ENCODE measurements at regions of chr9 and their contacts with region 1.

Region 1: DNA sequence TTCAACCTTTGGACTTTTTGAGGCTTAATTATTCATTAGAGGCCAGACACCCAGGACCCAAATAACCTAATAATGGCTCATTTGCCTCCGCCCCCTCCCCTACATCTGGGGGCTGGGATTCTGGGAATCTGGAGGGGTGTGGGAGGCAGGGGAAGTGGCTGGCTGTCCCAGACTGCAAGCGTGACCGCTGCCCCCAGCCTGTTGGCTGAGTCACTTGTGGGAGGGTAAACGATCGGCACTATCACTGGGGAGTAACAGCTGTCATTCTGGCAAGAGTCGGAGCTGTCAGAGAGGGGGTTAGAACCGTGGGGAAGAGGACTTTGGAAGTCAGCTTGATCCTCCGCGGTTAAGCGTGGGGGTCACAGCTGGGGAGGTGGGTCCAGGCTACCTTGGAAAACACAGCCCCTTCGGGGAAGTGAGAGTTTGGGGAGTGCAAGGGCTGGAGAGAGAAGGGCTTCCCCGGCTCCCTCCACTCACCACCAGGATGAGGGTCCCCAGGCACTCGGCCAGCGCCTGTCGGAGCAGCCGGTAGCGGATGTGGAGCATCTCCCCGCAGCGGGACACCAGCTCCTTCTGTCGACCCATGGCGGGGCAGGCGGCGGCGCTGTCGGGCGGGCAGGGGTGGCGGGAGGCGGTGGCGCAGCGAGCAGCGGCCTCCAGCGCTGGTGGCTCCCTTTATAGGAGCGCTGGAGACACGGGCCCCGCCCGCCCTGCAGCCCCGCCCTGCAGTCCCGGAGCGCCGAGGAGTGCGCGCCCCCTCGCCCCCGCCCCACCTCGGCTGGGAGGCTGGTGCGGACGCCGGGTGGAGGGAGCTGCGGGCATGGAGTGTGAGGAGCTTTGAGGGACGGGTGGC is at the start of gene AQP3:
- DNase-seq: peak; percentile 85
- ATAC-seq: peak; percentile 68
- H3K4me3 Mint-ChIP-seq: peak within 1 kb of the TSS; percentile 79
- H3K27ac Mint-ChIP-seq: peak within 1 kb of the TSS; percentile 93
- H3K4me1 Mint-ChIP-seq: peaks cover 43% of the 10 kb centered on the region
- H3K27me3 Mint-ChIP-seq: no peaks in the 10 kb centered on the region
- total RNA-seq, gene AQP3: 8.5 to 11.3 TPM

Region 2: DNA sequence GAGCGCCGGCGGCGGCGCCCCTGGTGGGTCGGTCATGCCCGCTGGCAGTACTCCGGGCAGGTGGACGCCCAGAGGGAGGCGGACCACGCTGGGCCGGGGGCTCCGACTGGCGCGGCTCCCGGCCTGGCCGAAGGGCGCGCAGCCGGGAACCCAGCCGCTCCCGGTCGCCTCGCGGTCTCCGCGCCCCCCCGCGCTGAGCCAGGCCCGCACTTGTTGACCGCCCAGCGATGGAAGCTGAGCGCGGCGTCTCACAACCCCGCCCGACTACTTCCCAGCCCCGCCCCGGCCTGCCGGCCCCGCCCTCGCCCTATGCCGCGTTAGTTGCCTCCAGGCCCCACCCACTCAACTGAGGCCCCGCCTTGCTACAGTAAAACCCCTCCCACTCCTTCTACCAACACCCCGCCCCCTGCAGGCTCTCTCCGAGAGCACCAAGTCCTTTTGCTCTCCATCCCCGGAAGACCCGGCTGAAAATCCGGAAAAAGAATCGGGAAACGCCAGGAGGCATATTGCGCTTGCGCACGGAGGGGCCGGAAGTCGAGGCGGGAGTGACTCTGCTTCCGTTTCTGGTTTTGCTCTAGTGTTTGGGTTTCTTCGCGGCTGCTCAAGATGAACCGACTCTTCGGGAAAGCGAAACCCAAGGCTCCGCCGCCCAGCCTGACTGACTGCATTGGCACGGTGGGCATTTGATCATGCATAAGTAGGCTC is 182.5 kb before region 1 on chr9 and contains the starts of genes BAG1 and CHMP5:
- CTCF ChIA-PET with region 1: no interaction called
- POLR2A ChIA-PET with region 1: no interaction called
- intact Hi-C with region 1: loop called (anchors 1 to 2 kb)
- DNase-seq: peak; percentile 100
- ATAC-seq: peak; percentile 96
- H3K4me3 Mint-ChIP-seq: peak within 1 kb of the TSS; percentile 97
- H3K27ac Mint-ChIP-seq: peak within 1 kb of the TSS; percentile 99
- H3K4me1 Mint-ChIP-seq: peaks cover 51% of the 10 kb centered on the region
- H3K27me3 Mint-ChIP-seq: no peaks in the 10 kb centered on the region
- total RNA-seq, gene BAG1: 47.9 to 65.8 TPM
- total RNA-seq, gene CHMP5: 102 to 106 TPM

Region 3: DNA sequence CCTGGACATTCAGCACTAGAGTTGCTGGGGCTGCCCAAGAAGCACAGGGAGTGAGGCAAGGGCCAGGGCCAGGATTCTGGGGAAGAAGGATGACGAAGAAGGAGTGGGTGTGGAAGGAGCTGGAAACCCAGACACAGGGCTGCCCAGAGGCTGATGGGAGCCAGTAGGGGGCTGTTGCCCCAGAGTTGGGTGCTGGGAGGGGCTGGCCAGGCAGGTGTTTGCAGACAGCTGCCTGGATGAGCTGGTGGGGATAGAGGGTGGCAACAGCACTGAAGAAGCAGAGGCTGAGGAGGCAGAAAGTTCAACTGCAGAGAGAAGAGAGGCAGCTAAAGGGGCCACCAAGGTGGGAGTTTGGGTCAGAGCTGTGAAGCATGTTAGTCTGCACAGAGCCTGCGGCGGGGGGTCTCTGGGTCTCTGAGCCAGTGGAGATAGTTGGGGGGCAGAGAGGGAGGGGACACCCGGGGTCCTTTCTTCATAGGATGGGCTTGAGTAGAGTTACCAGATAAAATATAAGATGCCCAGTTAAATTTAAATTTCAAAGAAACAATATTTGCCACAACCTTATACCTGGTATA is 42.3 kb before region 1 on chr9:
- CTCF ChIA-PET with region 1: interaction called, 36 read pairs
- POLR2A ChIA-PET with region 1: no interaction called
- intact Hi-C with region 1: loop called in 1 of 2 experiments (anchors 2 kb)
- DNase-seq: no peak
- ATAC-seq: no peak
- H3K4me3 Mint-ChIP-seq: no peak overlapping the region
- H3K27ac Mint-ChIP-seq: no peak overlapping the region
- H3K4me1 Mint-ChIP-seq: peaks cover 3% of the 10 kb centered on the region
- H3K27me3 Mint-ChIP-seq: no peaks in the 10 kb centered on the region

Region 4: GRCh38 chr9:33458444-33458843 is 11.3 kb after region 1 on chr9:
- CTCF ChIA-PET with region 1: interaction called, 19 read pairs
- POLR2A ChIA-PET with region 1: no interaction called
- intact Hi-C with region 1: loop called (anchors 1 to 2 kb)
- DNase-seq: peak; percentile 73
- ATAC-seq: peak; percentile 87
- H3K4me3 Mint-ChIP-seq: peak overlapping the region; percentile 38
- H3K27ac Mint-ChIP-seq: peak overlapping the region; percentile 95
- H3K4me1 Mint-ChIP-seq: peaks cover 59% of the 10 kb centered on the region
- H3K27me3 Mint-ChIP-seq: no peaks in the 10 kb centered on the region